Activated naive CD4-positive, alpha-beta T cell treated with anti-CD3 and anti-CD28 coated beads for 36 hours (primary cell): ENCODE measurements at regions of chr7 and their contacts with region 1.

Region 1: GRCh38 chr7:7176421-7177043 is 5.8 kb upstream of the C1GALT1 start:
- DNase-seq: no peak
- H3K4me3 Mint-ChIP-seq: peak overlapping the region; percentile 3
- H3K27ac Mint-ChIP-seq: no peak overlapping the region
- H3K4me1 Mint-ChIP-seq: peaks cover 19% of the 10 kb centered on the region
- H3K27me3 Mint-ChIP-seq: no peaks in the 10 kb centered on the region

Region 2: DNA sequence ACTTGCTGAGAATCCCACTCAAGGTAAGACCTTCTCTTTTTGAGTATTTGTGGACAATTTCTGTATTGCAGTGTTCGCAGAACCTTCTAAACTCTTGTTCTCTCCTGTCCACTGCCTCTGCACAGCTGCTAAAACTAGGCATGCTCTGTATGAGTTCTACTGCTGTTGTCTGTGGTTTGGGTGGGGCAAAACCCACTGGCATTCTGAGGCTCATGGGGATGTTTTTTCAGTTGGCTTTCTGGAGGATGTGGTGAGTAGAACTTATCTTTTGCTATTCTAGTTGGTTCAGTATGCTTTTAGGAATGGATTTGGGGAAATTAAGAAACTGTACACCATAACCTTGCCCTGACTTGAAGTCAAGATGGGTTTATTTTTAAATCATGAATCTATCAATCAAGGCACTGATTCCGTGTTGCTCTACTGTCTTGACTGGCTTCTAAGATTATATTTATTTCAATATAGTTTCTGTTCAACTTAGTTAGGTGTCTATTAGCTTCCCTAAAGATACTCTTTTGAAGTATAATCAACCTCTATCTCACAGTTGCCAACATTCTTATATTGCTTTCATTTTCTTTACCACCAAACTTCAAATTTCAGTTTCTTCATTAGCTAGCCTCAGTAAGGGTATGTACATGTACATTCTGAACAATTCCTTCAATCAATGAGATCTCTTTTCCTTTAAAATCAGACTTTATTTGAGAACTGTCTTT is 19.2 kb before region 1 on chr7:
- CTCF ChIA-PET with region 1: no interaction called
- intact Hi-C with region 1: loop called (anchors 1 kb)
- DNase-seq: peak; percentile 67
- H3K4me3 Mint-ChIP-seq: peak overlapping the region; percentile 61
- H3K27ac Mint-ChIP-seq: peak overlapping the region; percentile 81
- H3K4me1 Mint-ChIP-seq: peaks cover 49% of the 10 kb centered on the region
- H3K27me3 Mint-ChIP-seq: no peaks in the 10 kb centered on the region

Region 3: GRCh38 chr7:7165372-7165771 is 11.2 kb before region 1 on chr7:
- CTCF ChIA-PET with region 1: interaction called, 5 read pairs
- intact Hi-C with region 1: loop called (anchors 1 kb)
- DNase-seq: no peak
- H3K4me3 Mint-ChIP-seq: no peak overlapping the region
- H3K27ac Mint-ChIP-seq: no peak overlapping the region
- H3K4me1 Mint-ChIP-seq: peaks cover 30% of the 10 kb centered on the region
- H3K27me3 Mint-ChIP-seq: no peaks in the 10 kb centered on the region

Region 4: GRCh38 chr7:7188091-7188490 is 11.6 kb after region 1 on chr7:
- CTCF ChIA-PET with region 1: no interaction called
- intact Hi-C with region 1: no loop called
- DNase-seq: no peak
- H3K4me3 Mint-ChIP-seq: no peak overlapping the region
- H3K27ac Mint-ChIP-seq: no peak overlapping the region
- H3K4me1 Mint-ChIP-seq: peaks cover 34% of the 10 kb centered on the region
- H3K27me3 Mint-ChIP-seq: no peaks in the 10 kb centered on the region